Mammary epithelial cell (primary cell): ENCODE measurements at regions of chr14 and their contacts with region 1.

Region 1: DNA sequence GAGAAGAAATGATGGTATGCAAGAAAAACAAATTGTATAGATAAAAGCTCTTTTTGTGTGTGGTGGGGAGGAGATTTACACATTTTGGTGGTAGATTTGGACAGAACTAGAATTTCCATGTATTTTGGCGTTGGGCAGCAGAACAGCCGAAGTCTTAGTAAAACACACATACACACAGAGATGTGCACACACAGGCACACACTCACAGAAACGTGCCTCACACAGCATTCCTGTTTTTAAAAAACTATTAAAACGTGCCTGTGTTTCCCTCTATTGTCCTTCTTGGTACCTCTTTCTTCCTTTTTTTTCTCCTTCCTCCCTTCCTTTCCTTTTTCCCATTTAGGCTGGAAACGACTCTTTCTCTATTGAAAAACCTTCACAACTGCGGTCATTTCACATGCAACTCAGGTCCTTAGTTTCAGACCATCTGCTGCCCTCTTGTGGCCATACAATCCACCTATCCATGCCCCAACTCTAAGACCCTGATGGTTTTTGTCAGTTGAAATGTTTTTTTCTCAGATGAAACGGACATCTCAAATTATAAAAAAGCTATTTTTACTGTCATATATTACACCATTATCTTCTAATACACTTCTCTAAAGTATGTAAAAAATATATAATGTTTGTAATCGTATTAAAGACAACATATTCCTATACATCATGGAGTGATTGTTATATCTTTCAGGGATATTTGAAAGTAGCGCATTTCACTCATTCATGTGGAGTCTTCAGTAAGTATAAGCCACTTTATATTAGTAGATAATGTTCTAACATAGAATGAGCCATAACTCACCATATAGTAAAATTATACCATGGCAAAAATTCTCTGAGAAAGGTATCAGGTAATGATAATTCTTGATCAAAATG is 386.7 kb upstream of the NOVA1 start:
- DNase-seq: peak; percentile 1
- H3K4me3 ChIP-seq: no peak overlapping the region
- H3K27ac ChIP-seq: no peak overlapping the region
- H3K4me1 ChIP-seq: no peaks in the 10 kb centered on the region
- H3K27me3 ChIP-seq: no peaks in the 10 kb centered on the region
- CTCF ChIP-seq: peak; percentile 36 to 56

Region 2: DNA sequence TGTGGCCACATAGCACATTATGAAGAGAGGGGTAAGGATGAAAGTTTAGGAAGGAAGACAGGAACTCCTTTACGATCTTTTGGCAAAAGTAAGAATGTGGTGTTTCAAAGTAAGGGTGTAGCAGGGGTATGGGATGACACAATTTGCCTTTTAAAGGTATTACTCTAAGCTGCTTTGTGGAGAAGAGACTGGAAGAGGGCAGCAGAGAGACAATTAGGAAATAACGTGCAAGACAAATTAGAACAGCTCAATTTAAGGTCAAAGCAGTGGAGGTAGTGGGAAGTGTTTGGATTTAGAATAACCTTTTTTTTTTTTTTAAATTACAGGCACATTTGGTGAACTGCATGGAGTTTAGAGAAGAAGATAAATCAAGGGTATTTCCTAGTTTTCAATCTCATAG is 729.3 kb before region 1 on chr14:
- CTCF ChIA-PET with region 1: no interaction called
- dilution Hi-C with region 1: no loop called
- in situ Hi-C with region 1: no loop called
- intact Hi-C with region 1: loop called (anchors 2 kb)
- DNase-seq: no peak
- H3K4me3 ChIP-seq: no peak overlapping the region
- H3K27ac ChIP-seq: no peak overlapping the region
- H3K4me1 ChIP-seq: no peaks in the 10 kb centered on the region
- H3K27me3 ChIP-seq: no peaks in the 10 kb centered on the region
- CTCF ChIP-seq: peak in 1 of 2 donors; percentile 28

Region 3: GRCh38 chr14:26887847-26888246 is 96.7 kb before region 1 on chr14:
- CTCF ChIA-PET with region 1: no interaction called
- dilution Hi-C with region 1: no loop called
- in situ Hi-C with region 1: no loop called
- intact Hi-C with region 1: no loop called
- DNase-seq: no peak
- H3K4me3 ChIP-seq: no peak overlapping the region
- H3K27ac ChIP-seq: no peak overlapping the region
- H3K4me1 ChIP-seq: no peaks in the 10 kb centered on the region
- H3K27me3 ChIP-seq: no peaks in the 10 kb centered on the region
- CTCF ChIP-seq: no peak